ENCODE measurements at regions of chr3 and their contacts with region 1.

Region 1: GRCh38 chr3:167882067-167882667 is 146.6 kb downstream of the SERPINI1 start:
- DNase-seq: peak; percentile 60
- ATAC-seq: peak; percentile 74
- H3K4me3 ChIP-seq: no peak overlapping the region
- H3K27ac ChIP-seq: no peak overlapping the region
- H3K4me1 ChIP-seq: no peaks in the 10 kb centered on the region
- H3K27me3 ChIP-seq: no peaks in the 10 kb centered on the region
- CTCF ChIP-seq: peak; percentile 62
- POLR2A ChIP-seq: no peak
- RAD21 ChIP-seq: peak; percentile 49

Region 2: GRCh38 chr3:167372138-167372537 is 510.0 kb before region 1 on chr3:
- CTCF ChIA-PET with region 1: no interaction called
- POLR2A ChIA-PET with region 1: no interaction called
- dilution Hi-C with region 1: no loop called
- in situ Hi-C with region 1: loop called (anchors 10 kb)
- intact Hi-C with region 1: no loop called
- DNase-seq: no peak
- ATAC-seq: no peak
- H3K4me3 ChIP-seq: no peak overlapping the region
- H3K27ac ChIP-seq: no peak overlapping the region
- H3K4me1 ChIP-seq: no peaks in the 10 kb centered on the region
- H3K27me3 ChIP-seq: no peaks in the 10 kb centered on the region
- CTCF ChIP-seq: no peak
- POLR2A ChIP-seq: no peak
- RAD21 ChIP-seq: no peak

Region 3: DNA sequence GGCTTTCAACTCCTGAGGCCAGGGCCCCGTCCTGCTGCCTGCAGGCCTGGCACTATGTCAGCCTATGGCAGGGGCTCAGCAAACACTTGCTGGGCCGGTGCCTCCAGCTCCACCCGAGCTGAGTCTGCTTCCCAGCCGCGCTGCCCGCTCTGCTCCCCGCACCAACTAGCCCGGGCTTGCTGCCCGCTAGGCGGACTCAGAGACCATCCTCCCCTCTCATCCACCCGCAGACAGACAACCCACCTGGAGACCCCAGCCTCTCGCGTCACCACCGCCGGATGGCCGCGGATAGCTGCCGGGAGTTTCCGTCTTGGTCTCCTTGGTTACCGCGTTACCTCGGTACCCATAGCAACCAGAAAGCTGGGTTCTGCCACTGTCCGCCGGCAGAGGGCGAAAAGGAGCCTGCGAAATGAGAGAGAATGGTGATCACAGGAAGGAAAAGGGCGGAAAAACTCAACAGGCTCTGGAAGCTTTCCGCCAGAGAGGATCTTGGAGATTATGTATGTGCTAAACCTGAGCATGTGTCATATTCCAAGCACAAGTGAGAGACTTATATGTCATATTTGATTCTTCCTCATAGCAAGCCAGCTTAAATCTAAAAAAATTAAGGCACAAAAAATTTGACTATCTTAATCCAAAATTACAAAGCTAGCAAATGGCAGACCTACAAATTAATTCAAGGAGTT is 502.0 kb before region 1 on chr3 and contains the start of gene ZBBX:
- CTCF ChIA-PET with region 1: interaction called, 9 read pairs
- POLR2A ChIA-PET with region 1: no interaction called
- dilution Hi-C with region 1: no loop called
- in situ Hi-C with region 1: loop called (anchors 10 kb)
- intact Hi-C with region 1: loop called (anchors 1 kb)
- DNase-seq: peak; percentile 59
- ATAC-seq: peak; percentile 99
- H3K4me3 ChIP-seq: peak within 1 kb of the TSS; percentile 50
- H3K27ac ChIP-seq: no peak within 1 kb of the TSS
- H3K4me1 ChIP-seq: no peaks in the 10 kb centered on the region
- H3K27me3 ChIP-seq: no peaks in the 10 kb centered on the region
- CTCF ChIP-seq: peak; percentile 93
- POLR2A ChIP-seq: no peak
- RAD21 ChIP-seq: peak; percentile 72
- total RNA-seq, gene ZBBX: not detected in 2 replicates

Region 4: DNA sequence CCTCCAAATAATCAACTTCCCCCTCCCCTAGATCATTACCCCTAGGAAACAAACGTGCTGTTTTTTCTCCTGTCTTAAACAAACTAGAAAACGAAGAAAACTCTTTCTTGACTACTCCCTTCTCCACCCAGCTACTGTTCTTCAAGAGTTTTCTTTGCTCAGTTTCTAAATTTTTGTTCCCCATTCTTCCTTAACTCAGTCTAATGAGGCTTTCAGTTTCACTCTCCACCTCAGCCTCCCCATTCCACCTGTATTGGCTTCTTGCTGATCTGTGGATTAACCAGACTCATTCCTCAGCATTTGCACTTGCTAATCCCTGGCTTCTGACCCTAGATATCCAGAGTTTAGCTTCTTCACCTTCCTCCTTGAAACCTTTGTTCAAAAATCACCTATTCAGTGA is 119.9 kb before region 1 on chr3:
- CTCF ChIA-PET with region 1: no interaction called
- POLR2A ChIA-PET with region 1: no interaction called
- dilution Hi-C with region 1: no loop called
- in situ Hi-C with region 1: no loop called
- intact Hi-C with region 1: no loop called
- DNase-seq: no peak
- ATAC-seq: no peak
- H3K4me3 ChIP-seq: no peak overlapping the region
- H3K27ac ChIP-seq: no peak overlapping the region
- H3K4me1 ChIP-seq: no peaks in the 10 kb centered on the region
- H3K27me3 ChIP-seq: no peaks in the 10 kb centered on the region
- CTCF ChIP-seq: no peak
- POLR2A ChIP-seq: no peak
- RAD21 ChIP-seq: no peak

Region 5: GRCh38 chr3:167837466-167837865 is 44.7 kb before region 1 on chr3:
- CTCF ChIA-PET with region 1: interaction called, 6 read pairs
- POLR2A ChIA-PET with region 1: no interaction called
- dilution Hi-C with region 1: no loop called
- in situ Hi-C with region 1: no loop called
- intact Hi-C with region 1: loop called (anchors 5 kb)
- DNase-seq: no peak
- ATAC-seq: no peak
- H3K4me3 ChIP-seq: no peak overlapping the region
- H3K27ac ChIP-seq: no peak overlapping the region
- H3K4me1 ChIP-seq: no peaks in the 10 kb centered on the region
- H3K27me3 ChIP-seq: no peaks in the 10 kb centered on the region
- CTCF ChIP-seq: 0 out of 2 replicates have a peak, but pooled peaks have one; percentile 19
- POLR2A ChIP-seq: no peak
- RAD21 ChIP-seq: 0 out of 2 replicates have a peak, but pooled peaks have one; percentile 9